Activated CD4-positive, alpha-beta memory T cell treated with anti-CD3 and anti-CD28 coated beads for 36 hours (primary cell): ENCODE measurements at regions of chr2 and their contacts with region 1.

Region 1: GRCh38 chr2:33069894-33070651 is 123.3 kb downstream of the LTBP1 start:
- DNase-seq: peak; percentile 77
- H3K4me3 Mint-ChIP-seq: no peak overlapping the region
- H3K27ac Mint-ChIP-seq: no peak overlapping the region
- H3K4me1 Mint-ChIP-seq: peaks cover 4% of the 10 kb centered on the region
- H3K27me3 Mint-ChIP-seq: peaks cover 14% of the 10 kb centered on the region

Region 2: GRCh38 chr2:33599175-33599942 is 529.3 kb after region 1 on chr2 and contains the start of gene FAM98A:
- CTCF ChIA-PET with region 1: no interaction called
- POLR2A ChIA-PET with region 1: no interaction called
- intact Hi-C with region 1: loop called (anchors 10 kb)
- DNase-seq: peak; percentile 99
- H3K4me3 Mint-ChIP-seq: peak within 1 kb of the TSS; percentile 90
- H3K27ac Mint-ChIP-seq: peak within 1 kb of the TSS; percentile 82
- H3K4me1 Mint-ChIP-seq: peaks cover 22% of the 10 kb centered on the region
- H3K27me3 Mint-ChIP-seq: no peaks in the 10 kb centered on the region
- total RNA-seq, gene FAM98A: 46.7 to 46.8 TPM